Motor neuron (in vitro differentiated cells): ENCODE measurements at regions of chr4 and their contacts with region 1.

Region 1: GRCh38 chr4:41318867-41319535 is 62.3 kb downstream of the UCHL1 start:
- ATAC-seq: peak in 2 of 8 experiments; percentile 3 to 32
- H3K4me3 ChIP-seq: no peak overlapping the region
- H3K27ac ChIP-seq: no peak overlapping the region
- H3K4me1 ChIP-seq: peaks cover 0 to 9% of the 10 kb centered on the region in 2 donors

Region 2: DNA sequence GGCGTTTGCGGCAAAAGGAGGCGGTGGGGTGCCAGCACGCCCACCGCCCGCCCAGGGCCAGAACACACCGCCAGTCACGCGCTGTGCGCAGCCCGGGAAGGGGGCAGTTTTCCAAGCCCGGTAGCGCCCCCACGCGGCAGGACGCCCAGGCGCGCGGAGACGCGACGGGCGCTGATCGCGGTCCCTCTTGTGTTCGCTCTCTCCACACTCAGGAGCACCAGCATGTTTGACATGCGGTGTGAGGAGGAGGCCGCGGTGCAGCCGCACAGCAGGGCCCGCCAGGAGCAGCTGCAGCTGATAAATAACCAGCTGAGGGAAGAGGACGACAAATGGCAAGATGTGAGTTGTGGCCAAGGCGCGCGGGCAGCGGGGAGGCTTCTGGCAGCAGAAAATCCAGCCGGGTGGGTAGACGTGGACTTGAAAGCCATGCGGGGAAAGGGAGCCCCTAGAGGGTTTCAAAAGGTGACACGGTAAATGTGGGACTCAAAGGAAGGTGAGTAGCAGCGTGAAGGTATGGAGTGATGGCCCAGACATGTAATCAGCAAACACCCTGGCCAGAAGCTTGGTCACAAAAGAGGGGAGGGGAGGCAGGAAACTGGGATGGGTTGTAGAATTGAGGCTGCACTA is 325.4 kb after region 1 on chr4:
- in situ Hi-C with region 1: loop called in 1 of 9 experiments (anchors 25 kb)
- ATAC-seq: peak; percentile 32 to 100 (median 100)
- H3K4me3 ChIP-seq: no peak overlapping the region
- H3K27ac ChIP-seq: no peak overlapping the region
- H3K4me1 ChIP-seq: peaks cover 14 to 18% of the 10 kb centered on the region in 2 donors